GM12878 (cell line): ENCODE measurements at regions of chr16 and their contacts with region 1.

Region 1: GRCh38 chr16:71894921-71895678 is at the start of gene IST1:
- DNase-seq: peak; percentile 85
- ATAC-seq: peak; percentile 90
- H3K4me3 ChIP-seq: peak within 1 kb of the TSS; percentile 91
- H3K27ac ChIP-seq: peak within 1 kb of the TSS; percentile 98
- H3K4me1 ChIP-seq: no peaks in the 10 kb centered on the region
- H3K27me3 ChIP-seq: no peaks in the 10 kb centered on the region
- CTCF ChIP-seq: no peak
- EP300 ChIP-seq: peak in 1 of 2 experiments; percentile 33; a peak in 2 of 4 replicates
- POLR2A ChIP-seq: peak; percentile 93
- RAD21 ChIP-seq: no peak
- polyA plus RNA-seq, gene IST1: 97.3 to 136 TPM

Region 2: GRCh38 chr16:71723537-71724319 is 171.4 kb before region 1 on chr16:
- CTCF ChIA-PET with region 1: no interaction called
- POLR2A ChIA-PET with region 1: interaction called, 11 read pairs
- RAD21 ChIA-PET with region 1: interaction called, 3 read pairs
- SMC1A ChIA-PET with region 1: no interaction called
- in situ Hi-C with region 1: no loop called
- intact Hi-C with region 1: no loop called
- DNase-seq: no peak
- ATAC-seq: peak; percentile 83
- H3K4me3 ChIP-seq: peak overlapping the region; percentile 81
- H3K27ac ChIP-seq: peak overlapping the region; percentile 58
- H3K4me1 ChIP-seq: peaks cover 14% of the 10 kb centered on the region
- H3K27me3 ChIP-seq: no peaks in the 10 kb centered on the region
- CTCF ChIP-seq: no peak
- EP300 ChIP-seq: no peak
- POLR2A ChIP-seq: peak; percentile 57; the same call in 1 of the 2 replicates
- RAD21 ChIP-seq: no peak

Region 3: GRCh38 chr16:71845639-71846430 is 49.3 kb before region 1 on chr16 and contains the start of gene ATXN1L:
- CTCF ChIA-PET with region 1: no interaction called
- POLR2A ChIA-PET with region 1: interaction called, 4 read pairs
- RAD21 ChIA-PET with region 1: interaction called, 4 read pairs
- SMC1A ChIA-PET with region 1: interaction called, 4 read pairs
- in situ Hi-C with region 1: no loop called
- intact Hi-C with region 1: loop called (anchors 2 kb)
- DNase-seq: peak; percentile 84
- ATAC-seq: peak; percentile 86
- H3K4me3 ChIP-seq: peak within 1 kb of the TSS; percentile 92
- H3K27ac ChIP-seq: peak within 1 kb of the TSS; percentile 90
- H3K4me1 ChIP-seq: peaks cover 44% of the 10 kb centered on the region
- H3K27me3 ChIP-seq: no peaks in the 10 kb centered on the region
- CTCF ChIP-seq: no peak
- EP300 ChIP-seq: peak; percentile 49 to 70; a peak in 2 of 4 replicates
- POLR2A ChIP-seq: peak; percentile 94
- RAD21 ChIP-seq: 0 out of 2 replicates have a peak, but pooled peaks have one; percentile 16
- polyA plus RNA-seq, gene ATXN1L: 1.8 to 2.0 TPM

Region 4: GRCh38 chr16:71929048-71929447 is 33.9 kb after region 1 on chr16:
- CTCF ChIA-PET with region 1: interaction called, 4 read pairs
- POLR2A ChIA-PET with region 1: interaction called, 12 read pairs
- RAD21 ChIA-PET with region 1: no interaction called
- SMC1A ChIA-PET with region 1: interaction called, 3 read pairs
- in situ Hi-C with region 1: no loop called
- intact Hi-C with region 1: no loop called
- DNase-seq: no peak
- ATAC-seq: no peak
- H3K4me3 ChIP-seq: no peak overlapping the region
- H3K27ac ChIP-seq: no peak overlapping the region
- H3K4me1 ChIP-seq: no peaks in the 10 kb centered on the region
- H3K27me3 ChIP-seq: no peaks in the 10 kb centered on the region
- CTCF ChIP-seq: no peak
- EP300 ChIP-seq: no peak
- POLR2A ChIP-seq: no peak
- RAD21 ChIP-seq: no peak